Kidney (tissue), 22 donors: ENCODE measurements at regions of chr15 and their contacts with region 1.

Region 1: GRCh38 chr15:76336254-76337058 is at the start of gene ISL2:
- DNase-seq: peak; percentile 57 to 84 (median 66)
- H3K4me3 ChIP-seq: peak within 1 kb of the TSS in 1 of 3 donors; percentile 35
- H3K27ac ChIP-seq: no peak within 1 kb of the TSS
- H3K4me1 ChIP-seq: peaks cover 0 to 22% (median 3%) of the 10 kb centered on the region in 3 donors
- H3K27me3 ChIP-seq: peaks cover 60% of the 10 kb centered on the region
- CTCF ChIP-seq: no peak
- total RNA-seq, gene ISL2: 0.44 TPM

Region 2: DNA sequence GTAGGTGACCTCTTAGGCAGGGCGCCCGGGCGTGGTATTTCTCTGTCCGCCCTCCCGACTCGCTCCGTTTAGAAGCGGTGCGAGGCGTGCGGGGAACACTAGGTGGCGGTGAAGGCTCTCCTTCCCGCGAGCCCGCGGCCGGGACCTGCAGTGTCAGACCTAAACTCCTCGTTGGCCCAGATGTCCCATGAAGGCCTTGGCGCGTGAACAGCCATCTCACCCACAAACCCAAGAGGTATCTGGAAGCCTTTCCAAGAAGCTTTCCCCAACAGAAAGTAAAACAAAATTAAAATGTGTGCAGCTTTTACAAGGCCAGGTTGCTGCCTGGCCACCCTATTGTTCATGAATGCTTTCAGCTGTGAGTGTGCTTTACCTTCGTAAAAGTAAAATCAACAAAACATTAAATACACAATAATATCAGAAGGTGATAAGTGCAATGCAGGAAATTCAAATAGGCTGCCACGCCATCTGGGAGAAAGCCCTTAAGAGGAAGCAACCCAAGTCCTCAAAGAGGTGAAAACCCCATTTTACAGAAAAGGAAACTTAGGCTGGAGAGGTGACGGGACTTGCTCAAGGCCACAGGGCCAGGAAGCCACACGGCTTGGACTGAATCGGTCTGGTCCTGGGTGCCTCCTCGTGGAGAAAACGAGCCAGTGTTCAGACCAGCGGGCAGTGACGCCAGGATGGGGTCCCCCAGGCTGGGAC is 145.5 kb before region 1 on chr15:
- intact Hi-C with region 1: loop called (anchors 10 kb)
- DNase-seq: peak; percentile 77 to 92 (median 83)
- H3K4me3 ChIP-seq: peak overlapping the region in 1 of 3 donors; percentile 12
- H3K27ac ChIP-seq: no peak overlapping the region
- H3K4me1 ChIP-seq: no peaks in the 10 kb centered on the region
- H3K27me3 ChIP-seq: peaks cover 2% of the 10 kb centered on the region
- CTCF ChIP-seq: peak; percentile 68